Mammary epithelial cell (primary cell): ENCODE measurements at regions of chr16 and their contacts with region 1.

Region 1: GRCh38 chr16:88856828-88857733 is at the starts of genes GALNS and TRAPPC2L:
- DNase-seq: peak; percentile 89
- H3K4me3 ChIP-seq: peak within 1 kb of the TSS; percentile 84 to 99 (median 85)
- H3K27ac ChIP-seq: peak within 1 kb of the TSS; percentile 63
- H3K4me1 ChIP-seq: peaks cover 16% of the 10 kb centered on the region
- H3K27me3 ChIP-seq: no peaks in the 10 kb centered on the region
- CTCF ChIP-seq: no peak
- total RNA-seq, gene GALNS: 21.7 to 29.8 TPM
- total RNA-seq, gene TRAPPC2L: 21.5 to 39.9 TPM

Region 2: DNA sequence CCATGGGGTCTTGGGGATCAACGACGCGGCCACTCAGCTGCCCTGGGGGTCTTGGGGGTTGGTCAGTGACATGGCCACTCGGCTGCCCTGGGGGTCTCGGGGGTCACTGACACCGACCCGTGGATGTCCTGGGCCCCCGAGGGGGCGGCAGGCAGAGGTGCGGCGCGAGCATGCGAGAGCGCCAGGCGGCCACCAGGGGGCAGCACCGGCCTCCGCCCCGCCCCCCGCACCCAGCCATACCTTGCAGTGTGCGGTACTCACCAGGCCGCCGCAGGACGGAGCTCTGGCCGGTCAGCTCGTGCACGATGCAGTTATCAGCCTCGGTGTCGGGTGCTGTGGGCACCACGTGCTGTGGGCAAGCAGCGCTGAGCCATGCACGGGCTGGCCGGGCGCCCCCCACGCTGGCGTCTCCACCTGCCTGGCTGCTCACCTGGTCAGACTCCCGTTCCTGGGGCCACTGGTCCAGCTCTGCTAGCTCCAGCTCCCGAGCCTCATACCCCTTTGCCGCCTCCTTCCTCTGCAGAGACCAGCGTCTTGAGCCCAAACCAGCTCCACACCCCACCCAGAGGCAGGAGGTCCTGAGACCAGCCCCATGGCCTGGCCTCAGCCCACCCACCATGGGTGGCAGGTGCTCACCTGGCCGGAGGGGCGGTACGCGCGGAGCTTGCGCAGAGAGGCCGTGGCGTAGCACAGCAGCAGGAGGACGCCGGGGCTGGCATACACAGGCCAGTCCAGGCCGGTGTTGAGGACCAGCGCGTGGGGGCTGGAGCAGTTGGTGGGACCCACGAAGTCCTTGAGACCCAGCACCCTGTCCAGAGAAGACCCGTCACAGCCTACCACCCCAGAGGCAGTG is 119.6 kb before region 1 on chr16:
- CTCF ChIA-PET with region 1: interaction called, 5 read pairs
- dilution Hi-C with region 1: no loop called
- in situ Hi-C with region 1: no loop called
- intact Hi-C with region 1: loop called (anchors 2 kb)
- DNase-seq: peak; percentile 29
- H3K4me3 ChIP-seq: no peak overlapping the region
- H3K27ac ChIP-seq: no peak overlapping the region
- H3K4me1 ChIP-seq: peaks cover 3% of the 10 kb centered on the region
- H3K27me3 ChIP-seq: no peaks in the 10 kb centered on the region
- CTCF ChIP-seq: peak; percentile 64 to 83

Region 3: DNA sequence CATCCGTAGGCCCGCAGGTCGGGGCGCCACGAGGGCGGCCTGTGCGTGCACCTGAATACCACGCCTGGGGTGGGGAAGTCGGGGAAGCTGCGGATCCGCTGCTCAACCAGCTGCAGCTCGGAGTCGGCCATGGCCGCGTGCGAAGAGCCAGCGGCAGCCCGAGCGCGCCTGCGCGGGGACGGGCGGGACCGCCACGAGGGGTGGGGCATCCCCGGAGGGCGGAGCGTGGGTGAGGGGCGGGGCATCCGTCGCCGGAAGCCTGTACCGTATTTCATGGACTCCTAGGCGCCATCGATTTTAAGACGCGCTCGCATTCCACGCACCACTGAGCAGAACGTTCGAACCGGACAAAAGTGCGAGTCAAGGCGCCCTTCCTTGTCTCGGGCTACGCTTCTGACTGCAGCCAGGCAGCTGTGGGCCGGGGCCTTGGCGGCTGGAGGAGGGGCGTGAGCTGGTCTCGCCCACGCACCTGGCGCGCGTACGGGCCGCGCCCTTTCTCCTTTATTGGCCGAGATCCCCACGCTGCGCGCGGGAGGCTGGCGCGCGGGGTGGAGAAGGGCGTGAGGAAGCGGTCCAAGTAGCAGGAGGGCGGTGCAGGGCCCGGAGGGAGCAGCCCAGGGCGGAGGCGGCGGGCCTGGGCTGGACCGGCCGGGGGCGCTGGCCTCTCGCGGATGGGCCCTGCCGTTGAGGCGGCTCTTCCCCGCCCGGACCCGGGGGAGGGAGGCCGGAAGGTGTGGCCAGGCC is 45.1 kb before region 1 on chr16 and contains the start of gene APRT:
- CTCF ChIA-PET with region 1: no interaction called
- dilution Hi-C with region 1: no loop called
- in situ Hi-C with region 1: no loop called
- intact Hi-C with region 1: loop called (anchors 1 kb)
- DNase-seq: peak; percentile 91
- H3K4me3 ChIP-seq: peak within 1 kb of the TSS; percentile 50 to 69 (median 67)
- H3K27ac ChIP-seq: peak within 1 kb of the TSS; percentile 14
- H3K4me1 ChIP-seq: peaks cover 29% of the 10 kb centered on the region
- H3K27me3 ChIP-seq: no peaks in the 10 kb centered on the region
- CTCF ChIP-seq: peak in 1 of 2 donors; percentile 38
- total RNA-seq, gene APRT: 51.5 to 136 TPM

Region 4: DNA sequence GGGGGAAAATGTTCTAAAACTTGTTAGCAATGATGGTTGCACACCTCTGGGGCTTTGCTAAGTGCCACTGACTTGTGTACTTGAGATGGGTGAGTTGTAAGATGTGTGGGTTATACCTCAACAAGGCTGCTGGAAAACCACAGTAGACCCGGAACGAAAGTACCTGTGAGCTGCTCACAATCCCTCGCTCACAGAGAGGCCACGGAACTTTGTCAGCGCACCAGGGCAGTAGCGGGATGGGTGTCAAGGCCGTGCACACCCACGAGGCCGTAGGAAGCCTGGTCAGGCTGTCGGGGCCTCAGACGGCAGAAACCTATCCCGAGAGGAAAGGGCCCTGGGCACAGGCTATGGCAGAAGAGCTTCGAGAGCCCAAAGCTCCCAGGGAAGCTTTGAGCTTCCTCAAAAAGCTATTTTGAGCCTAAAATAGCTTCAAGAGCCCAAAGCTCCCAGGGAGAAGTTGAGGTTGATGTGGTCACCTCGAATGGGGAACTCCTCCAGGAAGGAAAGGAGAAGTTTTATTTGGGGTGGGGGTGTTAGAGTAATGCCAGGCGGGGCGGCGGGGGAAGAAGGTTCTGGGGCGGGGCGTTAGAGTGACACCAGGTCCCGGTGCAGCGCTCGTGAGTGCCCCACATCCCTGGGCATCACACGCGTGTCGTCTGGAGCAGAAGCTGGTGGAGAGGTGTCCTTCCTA is 101.0 kb after region 1 on chr16:
- CTCF ChIA-PET with region 1: no interaction called
- dilution Hi-C with region 1: no loop called
- in situ Hi-C with region 1: no loop called
- intact Hi-C with region 1: no loop called
- DNase-seq: no peak
- H3K4me3 ChIP-seq: no peak overlapping the region
- H3K27ac ChIP-seq: no peak overlapping the region
- H3K4me1 ChIP-seq: no peaks in the 10 kb centered on the region
- H3K27me3 ChIP-seq: peaks cover 6% of the 10 kb centered on the region
- CTCF ChIP-seq: no peak

Region 5: DNA sequence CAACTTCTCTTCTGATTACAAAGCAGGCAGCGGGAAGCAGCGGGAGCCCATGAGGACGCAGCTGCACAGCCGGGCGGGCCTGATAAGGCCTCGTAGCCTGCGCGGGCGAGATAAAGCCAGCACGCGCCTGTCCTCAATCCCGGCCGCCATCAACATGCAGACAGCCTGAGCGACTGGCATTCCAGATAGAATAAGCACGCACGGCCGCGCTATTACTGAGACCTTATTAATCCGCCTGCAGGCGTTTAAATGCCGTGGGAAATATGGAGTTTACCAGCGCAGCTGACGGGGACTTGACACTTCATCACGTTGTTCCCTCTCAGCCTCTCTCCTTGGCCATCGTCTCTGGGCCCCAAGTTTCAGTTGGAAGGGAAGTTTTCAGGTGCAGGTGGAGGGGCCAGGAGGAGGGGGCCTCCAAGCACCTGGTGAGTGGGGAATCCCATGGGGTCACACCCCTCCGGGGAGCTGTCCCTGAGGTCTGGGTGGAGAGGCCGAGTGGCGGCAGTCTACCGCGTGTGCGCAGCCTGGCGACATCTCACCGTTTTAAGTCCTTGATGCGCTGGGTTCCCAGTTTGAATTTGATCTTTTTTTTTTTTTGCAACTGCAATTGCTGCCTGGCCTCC is 147.2 kb after region 1 on chr16:
- CTCF ChIA-PET with region 1: no interaction called
- dilution Hi-C with region 1: no loop called
- in situ Hi-C with region 1: no loop called
- intact Hi-C with region 1: no loop called
- DNase-seq: no peak
- H3K4me3 ChIP-seq: no peak overlapping the region
- H3K27ac ChIP-seq: no peak overlapping the region
- H3K4me1 ChIP-seq: no peaks in the 10 kb centered on the region
- H3K27me3 ChIP-seq: peaks cover 3% of the 10 kb centered on the region
- CTCF ChIP-seq: no peak

Region 6: DNA sequence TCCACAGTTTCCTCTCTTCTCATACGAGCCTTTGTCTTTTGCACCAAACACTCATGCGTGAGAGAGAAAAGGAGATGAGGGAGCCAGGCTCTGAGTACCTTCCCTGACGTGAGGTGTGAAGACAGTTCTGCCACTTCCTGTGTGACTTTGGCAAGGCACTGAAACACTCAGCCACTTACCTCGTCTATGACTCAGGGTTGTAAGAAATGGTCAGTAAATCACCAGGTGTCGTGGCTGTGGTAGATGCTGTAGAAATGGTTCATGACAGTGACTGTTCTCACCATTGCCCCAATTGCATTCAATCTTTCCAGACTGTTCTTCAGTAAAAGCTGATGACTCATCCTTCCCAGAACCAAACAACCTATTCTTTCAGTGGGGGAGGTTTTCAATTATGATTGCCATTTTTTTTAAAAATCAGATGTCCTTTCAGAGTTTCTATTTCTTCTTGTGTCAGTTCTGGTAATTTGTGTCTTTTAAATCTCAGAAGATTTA is 169.1 kb after region 1 on chr16:
- CTCF ChIA-PET with region 1: no interaction called
- dilution Hi-C with region 1: loop called (anchors 10 kb)
- in situ Hi-C with region 1: no loop called
- intact Hi-C with region 1: no loop called
- DNase-seq: peak; percentile 40
- H3K4me3 ChIP-seq: no peak overlapping the region
- H3K27ac ChIP-seq: no peak overlapping the region
- H3K4me1 ChIP-seq: no peaks in the 10 kb centered on the region
- H3K27me3 ChIP-seq: peaks cover 3% of the 10 kb centered on the region
- CTCF ChIP-seq: no peak

Region 7: GRCh38 chr16:89115216-89115861 is 258.3 kb after region 1 on chr16:
- CTCF ChIA-PET with region 1: no interaction called
- dilution Hi-C with region 1: loop called (anchors 5 kb)
- in situ Hi-C with region 1: no loop called
- intact Hi-C with region 1: no loop called
- DNase-seq: peak; percentile 61
- H3K4me3 ChIP-seq: no peak overlapping the region
- H3K27ac ChIP-seq: no peak overlapping the region
- H3K4me1 ChIP-seq: peaks cover 17% of the 10 kb centered on the region
- H3K27me3 ChIP-seq: no peaks in the 10 kb centered on the region
- CTCF ChIP-seq: no peak

Region 8: DNA sequence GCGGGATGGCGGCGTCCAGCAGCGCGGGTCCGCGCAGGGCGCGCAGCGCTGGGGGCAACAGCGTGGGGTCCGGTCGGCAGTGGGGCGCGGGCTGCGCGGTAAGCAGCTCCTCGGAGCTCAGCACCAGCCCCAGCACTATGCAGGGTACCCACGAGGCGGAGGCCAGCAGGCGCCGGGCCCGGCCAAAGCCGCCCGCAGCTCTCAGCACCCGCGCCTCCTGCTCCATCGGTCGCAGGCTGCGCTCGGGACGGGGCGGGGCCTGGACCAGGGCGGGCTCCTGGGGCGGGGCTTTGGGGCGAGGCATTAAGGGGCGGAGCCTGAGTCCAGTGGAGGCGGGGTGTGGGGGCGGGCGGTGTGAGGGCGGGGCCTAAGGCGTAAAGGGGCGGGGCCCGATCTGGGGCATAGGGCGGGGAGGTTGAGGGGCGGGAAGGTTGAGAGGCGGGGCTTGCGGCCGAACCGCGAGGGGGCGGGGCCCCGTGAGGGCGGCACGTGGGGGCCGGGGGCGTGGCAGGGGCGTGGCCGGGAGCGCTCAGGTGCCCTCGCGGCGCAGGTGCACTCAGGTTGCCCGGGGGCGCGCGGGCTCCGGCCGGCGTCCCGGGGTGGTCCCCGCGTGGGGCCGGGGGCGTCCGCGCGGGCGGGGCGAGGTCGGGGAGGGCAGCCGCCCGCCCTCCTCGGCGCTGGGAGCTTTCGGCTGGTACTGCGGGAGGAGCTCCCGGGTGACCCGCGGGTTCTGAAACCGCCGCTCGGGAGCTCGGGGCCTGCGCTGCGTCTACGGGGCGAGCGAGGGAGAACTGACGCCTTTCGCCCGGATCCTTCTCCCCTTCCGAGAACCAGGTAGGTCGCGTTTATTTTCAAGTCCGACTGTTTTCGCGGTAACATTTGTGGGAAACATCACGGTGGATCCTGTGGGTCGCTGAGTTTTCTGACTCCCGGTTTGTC is 344.6 kb after region 1 on chr16:
- CTCF ChIA-PET with region 1: no interaction called
- dilution Hi-C with region 1: no loop called
- in situ Hi-C with region 1: no loop called
- intact Hi-C with region 1: no loop called
- DNase-seq: peak; percentile 59
- H3K4me3 ChIP-seq: no peak overlapping the region
- H3K27ac ChIP-seq: no peak overlapping the region
- H3K4me1 ChIP-seq: no peaks in the 10 kb centered on the region
- H3K27me3 ChIP-seq: peaks cover 18% of the 10 kb centered on the region
- CTCF ChIP-seq: no peak